ENCODE measurements at regions of chr1 and their contacts with region 1.

Region 1: GRCh38 chr1:94648225-94649007 is 106.9 kb upstream of the F3 start:
- DNase-seq: peak; percentile 59 to 90
- H3K4me3 ChIP-seq: peak overlapping the region in 1 of 2 donors; percentile 11
- H3K27ac ChIP-seq: peak overlapping the region; percentile 69 to 74
- H3K4me1 ChIP-seq: peaks cover 7 to 12% of the 10 kb centered on the region in 2 donors
- H3K27me3 ChIP-seq: no peaks in the 10 kb centered on the region
- CTCF ChIP-seq: no peak

Region 2: DNA sequence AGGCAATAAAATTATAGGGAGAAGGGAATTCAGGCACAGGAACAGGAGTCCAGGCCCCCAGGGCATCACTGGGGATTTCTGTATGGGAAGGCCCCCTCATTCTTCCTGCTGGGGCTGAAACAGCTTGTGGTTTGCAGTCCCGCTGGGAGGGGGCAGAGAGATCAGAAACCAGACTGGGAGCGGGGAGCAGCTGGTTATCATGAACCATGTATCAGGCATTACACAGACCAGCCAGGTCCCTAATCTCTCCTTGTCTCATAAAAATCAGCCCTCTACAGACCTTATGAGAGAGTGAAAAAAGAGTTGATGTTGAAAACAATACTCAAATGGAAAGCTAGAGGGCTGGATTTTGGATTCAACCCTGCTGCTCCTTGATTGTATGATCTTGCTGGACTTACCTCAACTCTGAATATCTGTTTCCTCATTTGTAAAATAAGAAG is 13.4 kb before region 1 on chr1:
- intact Hi-C with region 1: loop called (anchors 2 kb)
- DNase-seq: no peak
- H3K4me3 ChIP-seq: no peak overlapping the region
- H3K27ac ChIP-seq: no peak overlapping the region
- H3K4me1 ChIP-seq: no peaks in the 10 kb centered on the region
- H3K27me3 ChIP-seq: no peaks in the 10 kb centered on the region
- CTCF ChIP-seq: no peak